Activated naive CD8-positive, alpha-beta T cell treated with anti-CD3 and anti-CD28 coated beads, Interleukin-2, amount 10 ng/mL, durations not matched to agents 7 days and 5 days (primary cell): ENCODE measurements at regions of chr5 and their contacts with region 1.

Region 1: DNA sequence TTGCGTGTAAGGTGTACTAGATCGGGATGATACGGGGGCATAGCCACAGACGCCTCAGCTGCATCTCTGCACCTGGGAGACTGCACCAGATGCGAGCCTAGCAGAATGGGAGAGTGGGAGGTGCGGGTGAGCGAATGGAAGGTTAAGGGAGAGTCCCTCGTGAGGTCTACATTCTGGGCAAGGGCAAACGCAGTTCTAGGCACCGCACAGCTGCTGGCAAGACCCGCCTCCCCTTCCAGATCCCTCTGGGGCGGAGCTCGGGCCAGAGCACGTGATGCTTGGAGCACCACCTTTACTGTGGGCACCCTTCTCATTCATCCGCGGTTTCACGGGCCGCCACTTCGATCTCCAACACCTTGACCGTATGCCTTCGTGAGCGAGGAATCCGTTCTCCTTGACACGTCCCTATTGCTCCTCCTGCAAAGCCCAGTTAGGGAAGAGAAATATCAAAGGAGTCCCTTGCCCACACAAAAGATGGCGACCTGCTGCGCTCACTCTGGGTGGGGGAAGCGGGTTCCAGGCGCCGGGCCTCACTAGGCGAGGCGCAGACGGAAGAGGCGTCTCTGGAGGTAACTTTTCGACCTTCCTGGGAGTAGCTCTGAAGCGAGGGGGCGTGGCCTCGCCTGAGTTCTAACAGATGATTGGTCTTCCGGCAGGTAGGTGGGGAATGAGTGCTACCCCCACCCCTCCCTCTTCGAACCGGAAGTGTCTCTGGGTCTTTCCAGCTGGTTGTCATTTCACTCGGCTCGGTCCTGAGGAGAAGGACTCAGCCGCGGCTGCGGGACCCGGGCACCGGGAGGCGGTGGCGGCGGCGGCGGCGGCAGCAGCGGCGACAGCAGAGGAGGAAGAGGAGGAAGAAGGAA is at the start of gene CPEB4:
- DNase-seq: peak; percentile 92
- ATAC-seq: peak; percentile 96
- H3K4me3 Mint-ChIP-seq: peak within 1 kb of the TSS; percentile 94
- H3K27ac Mint-ChIP-seq: peak within 1 kb of the TSS; percentile 98
- H3K4me1 Mint-ChIP-seq: peaks cover 51% of the 10 kb centered on the region
- H3K27me3 Mint-ChIP-seq: no peaks in the 10 kb centered on the region
- total RNA-seq, gene CPEB4: 11.8 to 13.0 TPM

Region 2: DNA sequence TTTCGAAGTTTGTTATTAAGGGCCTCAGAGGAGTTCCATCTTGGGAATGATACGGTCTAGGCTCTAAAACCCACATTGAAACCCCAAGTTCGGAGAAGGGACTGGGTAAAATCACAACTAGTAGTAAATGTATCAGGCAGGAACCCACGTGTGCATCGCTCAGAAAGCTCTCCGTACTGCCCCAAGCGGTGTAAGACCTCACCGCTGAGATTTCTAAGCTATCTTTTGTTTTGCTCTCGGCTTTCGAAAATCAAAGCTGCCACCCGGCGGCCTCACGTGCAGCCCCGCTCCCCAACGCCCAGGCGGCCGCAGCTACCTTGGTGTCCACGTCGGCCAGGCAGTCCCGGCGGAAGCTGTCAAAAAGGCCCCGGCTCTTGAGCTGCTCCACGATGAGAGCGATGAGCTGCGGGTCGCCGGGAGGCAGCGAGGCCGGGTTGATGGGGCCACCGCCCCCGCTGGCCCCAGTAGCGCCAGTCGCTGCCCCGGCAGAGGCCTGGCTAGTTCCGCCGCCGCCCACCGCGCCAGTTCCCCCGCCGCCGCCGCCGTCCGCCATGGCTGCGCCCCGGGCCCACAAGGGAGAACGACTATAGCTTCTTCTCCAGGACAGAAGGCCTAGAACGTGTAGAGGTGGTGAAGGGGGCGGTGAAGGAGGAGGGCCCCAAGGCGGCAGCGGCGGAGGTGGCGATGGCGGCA is 271.8 kb before region 1 on chr5:
- POLR2A ChIA-PET with region 1: interaction called, 10 read pairs
- DNase-seq: peak; percentile 74
- ATAC-seq: peak; percentile 49
- H3K4me3 Mint-ChIP-seq: peak overlapping the region; percentile 89
- H3K27ac Mint-ChIP-seq: peak overlapping the region; percentile 90
- H3K4me1 Mint-ChIP-seq: peaks cover 29% of the 10 kb centered on the region
- H3K27me3 Mint-ChIP-seq: no peaks in the 10 kb centered on the region

Region 3: DNA sequence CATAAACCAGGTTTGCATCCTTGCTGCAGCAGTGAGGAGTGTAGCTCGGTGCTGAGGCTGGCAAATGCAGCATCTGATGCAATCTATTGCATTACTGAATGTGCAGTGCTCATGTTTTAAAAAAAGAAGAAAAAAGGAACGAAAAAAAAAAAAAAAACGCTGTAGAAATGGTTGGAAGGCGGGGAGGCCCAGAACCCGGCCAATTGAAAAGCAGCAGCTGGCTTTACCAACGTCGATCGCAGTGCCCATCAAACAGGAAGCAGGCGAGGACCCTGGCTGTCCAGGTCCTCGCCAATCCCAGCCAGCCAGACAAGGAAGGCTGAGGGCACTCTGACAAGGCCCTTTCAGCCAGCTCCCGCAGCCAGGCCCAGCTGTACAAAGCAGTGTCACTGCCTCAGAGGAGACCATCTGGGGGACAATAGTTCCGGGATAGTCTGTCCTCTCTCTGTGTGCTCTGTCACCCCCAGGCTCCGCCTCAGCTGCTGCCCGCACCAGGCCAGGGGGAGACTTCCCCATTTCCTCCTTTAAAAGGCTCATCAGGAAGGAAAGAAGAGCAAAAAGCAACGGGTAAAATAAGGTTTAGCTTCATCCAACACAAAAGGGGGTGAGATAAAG is 21.5 kb before region 1 on chr5:
- POLR2A ChIA-PET with region 1: interaction called, 11 read pairs
- DNase-seq: no peak
- ATAC-seq: no peak
- H3K4me3 Mint-ChIP-seq: no peak overlapping the region
- H3K27ac Mint-ChIP-seq: no peak overlapping the region
- H3K4me1 Mint-ChIP-seq: peaks cover 2% of the 10 kb centered on the region
- H3K27me3 Mint-ChIP-seq: peaks cover 5% of the 10 kb centered on the region

Region 4: DNA sequence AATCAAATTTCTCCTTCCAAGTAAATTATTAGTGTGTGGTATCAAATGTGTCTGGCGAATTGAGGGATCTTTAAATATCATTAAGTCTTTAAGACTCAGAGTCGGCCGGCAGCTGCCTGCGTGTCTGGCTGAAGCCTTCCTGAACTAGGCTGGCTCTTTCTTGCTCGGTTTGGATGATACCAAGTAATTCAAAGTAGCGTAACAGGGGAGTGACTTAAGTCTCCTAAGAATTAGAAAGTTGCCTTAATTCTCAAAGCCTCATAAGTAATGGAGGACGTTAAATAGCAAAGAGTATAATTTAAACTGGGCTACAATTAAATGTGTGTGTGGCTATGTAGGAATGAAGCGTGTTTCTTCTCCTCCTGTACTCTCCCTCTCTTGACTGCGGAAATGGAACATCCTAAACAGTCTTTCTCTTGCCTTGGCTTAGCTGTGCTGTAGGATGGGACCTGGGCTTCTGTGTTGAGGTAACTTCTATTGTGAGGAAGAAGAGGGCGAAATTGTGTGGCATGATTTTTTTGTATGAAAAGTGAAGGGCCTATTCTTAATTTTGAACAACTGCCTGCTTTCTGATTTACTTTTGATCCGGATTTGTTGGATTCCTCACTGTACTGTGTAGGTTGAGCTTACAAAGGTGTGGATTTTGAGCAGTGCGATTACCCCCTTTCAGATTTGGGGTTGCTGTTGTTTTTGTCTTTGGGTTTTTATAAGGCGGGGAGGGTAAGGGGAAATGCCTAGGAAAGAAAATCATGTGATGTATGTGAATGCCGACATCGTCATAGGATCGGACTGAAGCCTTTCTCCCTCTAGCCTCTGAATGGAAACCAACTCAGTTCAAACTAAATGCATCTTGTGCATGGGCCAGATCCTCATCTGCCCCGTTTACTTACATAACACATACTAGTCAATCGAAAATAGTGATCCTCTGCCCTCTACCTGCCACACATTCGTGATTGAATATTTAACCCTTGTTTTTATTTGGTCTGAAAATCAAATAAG is 30.2 kb after region 1 on chr5:
- POLR2A ChIA-PET with region 1: interaction called, 24 read pairs
- DNase-seq: peak; percentile 48
- ATAC-seq: peak; percentile 95
- H3K4me3 Mint-ChIP-seq: no peak overlapping the region
- H3K27ac Mint-ChIP-seq: no peak overlapping the region
- H3K4me1 Mint-ChIP-seq: peaks cover 7% of the 10 kb centered on the region
- H3K27me3 Mint-ChIP-seq: no peaks in the 10 kb centered on the region

Region 5: GRCh38 chr5:173928871-173929574 is 41.2 kb after region 1 on chr5:
- POLR2A ChIA-PET with region 1: no interaction called
- DNase-seq: no peak
- ATAC-seq: no peak
- H3K4me3 Mint-ChIP-seq: no peak overlapping the region
- H3K27ac Mint-ChIP-seq: no peak overlapping the region
- H3K4me1 Mint-ChIP-seq: peaks cover 5% of the 10 kb centered on the region
- H3K27me3 Mint-ChIP-seq: no peaks in the 10 kb centered on the region

Region 6: GRCh38 chr5:174056064-174056847 is 168.4 kb after region 1 on chr5:
- POLR2A ChIA-PET with region 1: no interaction called
- DNase-seq: no peak
- ATAC-seq: no peak
- H3K4me3 Mint-ChIP-seq: no peak overlapping the region
- H3K27ac Mint-ChIP-seq: no peak overlapping the region
- H3K4me1 Mint-ChIP-seq: no peaks in the 10 kb centered on the region
- H3K27me3 Mint-ChIP-seq: no peaks in the 10 kb centered on the region